Posterior vena cava (tissue), 2 donors: ENCODE measurements at regions of chr12 and their contacts with region 1.

Region 1: GRCh38 chr12:91617830-91618702 is 435.4 kb upstream of the DCN start:
- DNase-seq: no peak

Region 2: DNA sequence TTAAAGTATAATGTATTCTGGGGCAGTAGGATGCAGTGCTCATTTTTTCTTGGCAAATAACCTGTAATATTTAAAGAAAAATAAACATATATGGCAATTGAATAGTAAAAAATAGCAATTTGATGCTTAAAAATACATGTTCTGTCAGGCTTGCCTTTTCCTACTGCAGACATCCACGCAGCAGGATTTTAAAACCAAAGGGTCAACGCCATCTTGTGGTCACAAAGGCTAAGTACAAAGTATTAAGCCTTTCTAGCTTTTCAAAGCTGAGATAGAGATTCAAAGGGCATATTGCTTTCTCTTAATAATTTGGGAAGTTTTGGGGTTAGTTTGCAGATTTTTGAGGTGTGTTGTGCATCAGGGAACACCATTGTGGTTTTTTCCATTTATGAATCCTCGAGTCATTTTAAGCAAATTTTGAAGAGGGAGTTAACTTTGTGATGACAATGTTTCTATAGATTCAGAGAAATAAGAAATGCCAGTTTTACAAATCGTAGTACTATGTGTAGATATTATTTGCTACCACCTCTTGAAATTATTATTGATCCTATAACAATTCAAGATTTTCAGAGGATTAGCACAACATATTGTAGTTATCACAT is 658.4 kb before region 1 on chr12:
- intact Hi-C with region 1: loop called in 1 of 2 experiments (anchors 5 kb)
- DNase-seq: no peak

Region 3: GRCh38 chr12:91551927-91552326 is 66.1 kb before region 1 on chr12:
- intact Hi-C with region 1: loop called in 1 of 2 experiments (anchors 2 kb)
- DNase-seq: no peak

Region 4: DNA sequence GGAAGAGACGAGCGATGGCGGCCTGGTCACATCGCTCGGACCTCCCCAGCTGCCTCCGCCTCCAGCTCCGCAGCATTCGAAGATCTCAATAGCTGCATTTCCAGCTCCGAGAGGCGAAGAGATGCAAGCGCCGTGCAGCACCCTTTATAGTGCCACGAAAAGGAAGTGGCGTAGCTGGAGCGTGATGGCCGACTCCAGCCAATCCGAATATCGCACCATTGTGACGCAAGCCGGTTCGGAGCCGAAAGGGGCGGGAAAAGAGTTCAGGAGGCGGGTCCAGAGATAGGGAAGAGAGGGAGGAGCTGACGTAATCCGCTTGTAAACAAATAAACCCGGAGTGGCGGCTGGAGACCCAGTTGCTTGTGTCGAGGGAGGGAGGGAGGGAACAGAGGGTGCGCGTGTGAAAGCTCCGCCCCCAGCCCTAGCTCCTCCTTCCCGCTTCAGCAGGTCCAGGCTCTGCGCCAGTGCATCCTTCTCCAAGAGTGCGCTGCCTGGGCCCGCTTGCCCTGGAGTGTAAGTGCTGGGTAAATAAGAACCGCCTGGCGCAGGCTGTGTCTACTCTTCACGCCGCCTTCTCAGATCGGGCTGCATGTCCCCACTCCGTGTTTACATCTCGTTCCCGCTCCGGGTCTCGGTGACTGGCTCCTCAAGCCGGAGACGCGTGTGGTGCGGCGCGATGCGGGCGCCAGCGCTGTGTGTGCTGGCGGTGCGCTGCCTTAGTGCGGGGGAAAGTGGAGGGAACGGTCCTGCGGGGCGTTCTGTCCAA is 527.8 kb after region 1 on chr12 and contains the start of gene BTG1:
- intact Hi-C with region 1: no loop called
- DNase-seq: peak; percentile 99
- total RNA-seq, gene BTG1: 78.5 to 81.8 TPM